ENCODE measurements at regions of chr7 and their contacts with region 1.

Region 1: DNA sequence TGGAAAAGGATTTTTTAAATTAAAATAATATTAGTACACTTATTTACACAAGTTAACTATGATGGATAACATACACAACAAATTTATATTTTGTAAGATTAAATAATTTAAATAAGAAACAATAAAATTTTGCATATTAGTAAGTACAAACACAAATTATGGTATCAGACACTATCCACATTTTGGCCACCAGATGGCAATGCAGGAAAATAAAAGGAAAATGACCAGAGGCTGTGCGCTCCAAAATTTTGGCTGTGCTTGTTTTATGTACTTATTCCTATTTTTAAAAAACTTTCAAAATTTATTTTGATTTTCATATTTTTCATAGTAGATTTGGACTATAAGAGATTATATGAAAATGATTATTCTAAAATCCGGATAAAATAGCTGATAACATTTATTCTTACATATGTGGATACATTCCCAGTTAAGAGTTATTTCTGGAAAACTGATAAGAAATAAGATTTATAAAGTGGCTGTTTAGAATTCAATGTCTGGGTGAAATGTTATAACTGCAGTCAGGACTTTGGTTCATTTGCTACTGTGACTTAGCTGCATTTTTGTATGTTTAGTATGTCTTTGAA is 274.7 kb upstream of the HGF start:
- DNase-seq: peak; percentile 16
- H3K4me3 ChIP-seq: no peak overlapping the region
- H3K27ac ChIP-seq: no peak overlapping the region
- H3K4me1 ChIP-seq: peaks cover 14 to 29% of the 10 kb centered on the region in 2 experiments; a peak in 3 of 4 replicates
- H3K27me3 ChIP-seq: no peaks in the 10 kb centered on the region
- CTCF ChIP-seq: peak; percentile 89
- EP300 ChIP-seq: 0 out of 4 replicates have a peak, but pooled peaks of 1 of the 2 experiments have one; percentile 16
- RAD21 ChIP-seq: peak; percentile 97

Region 2: DNA sequence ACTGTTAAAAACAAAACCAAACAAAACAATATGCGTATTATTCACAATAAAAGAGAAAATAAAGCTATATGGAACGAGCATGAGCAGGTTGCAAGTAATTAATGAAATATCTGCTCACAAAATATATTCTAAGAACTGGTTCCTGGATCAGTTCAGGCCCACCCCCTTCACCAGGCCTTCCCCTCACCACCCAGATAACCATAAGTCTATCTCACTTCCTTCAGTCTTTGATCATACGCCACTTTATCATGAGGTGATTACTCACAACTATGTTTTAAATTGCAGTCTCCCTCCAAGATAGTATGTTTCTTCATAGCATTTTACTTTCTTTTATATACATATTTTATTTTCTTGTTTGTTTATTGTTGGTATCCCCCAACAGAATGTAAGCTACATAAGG is 11.7 kb before region 1 on chr7:
- CTCF ChIA-PET with region 1: interaction called, 13 read pairs
- POLR2A ChIA-PET with region 1: no interaction called
- DNase-seq: no peak
- H3K4me3 ChIP-seq: no peak overlapping the region
- H3K27ac ChIP-seq: no peak overlapping the region
- H3K4me1 ChIP-seq: peaks cover 8 to 23% of the 10 kb centered on the region in 2 experiments
- H3K27me3 ChIP-seq: no peaks in the 10 kb centered on the region
- CTCF ChIP-seq: no peak
- EP300 ChIP-seq: no peak
- RAD21 ChIP-seq: no peak

Region 3: DNA sequence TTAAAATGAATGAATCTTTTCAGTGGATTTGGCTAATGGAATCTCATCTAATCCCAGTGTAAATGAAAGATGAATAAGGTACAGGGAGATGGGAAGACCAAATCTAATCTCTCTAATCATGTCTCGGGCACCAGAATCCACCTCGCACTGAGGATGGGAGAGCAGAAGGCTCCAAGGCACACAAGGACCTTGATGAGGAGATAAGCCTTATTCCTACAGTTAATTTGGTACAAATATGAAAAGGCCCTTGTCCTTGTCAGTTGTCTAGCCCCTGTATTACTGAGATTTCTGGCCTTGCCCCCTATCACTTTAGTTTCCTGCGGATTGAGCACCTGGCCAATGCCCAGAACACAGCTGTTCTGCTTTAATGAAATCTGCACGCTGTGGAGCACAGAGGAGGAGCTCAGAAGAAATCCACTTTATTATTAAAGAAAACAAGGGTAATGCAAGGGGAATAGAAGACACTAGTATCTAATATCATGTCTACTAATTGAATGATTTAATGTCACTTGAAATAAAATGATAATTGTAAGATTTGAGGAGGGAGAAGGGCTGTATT is 46.6 kb after region 1 on chr7:
- CTCF ChIA-PET with region 1: no interaction called
- POLR2A ChIA-PET with region 1: no interaction called
- DNase-seq: peak; percentile 15
- H3K4me3 ChIP-seq: no peak overlapping the region
- H3K27ac ChIP-seq: peak overlapping the region in 1 of 2 experiments; percentile 44; a peak in 2 of 4 replicates
- H3K4me1 ChIP-seq: peaks cover 0 to 10% of the 10 kb centered on the region in 2 experiments; a peak in 3 of 4 replicates
- H3K27me3 ChIP-seq: no peaks in the 10 kb centered on the region
- CTCF ChIP-seq: no peak
- EP300 ChIP-seq: no peak
- RAD21 ChIP-seq: no peak

Region 4: GRCh38 chr7:82234457-82235049 is 190.0 kb after region 1 on chr7:
- CTCF ChIA-PET with region 1: interaction called, 29 read pairs
- POLR2A ChIA-PET with region 1: no interaction called
- DNase-seq: peak; percentile 22
- H3K4me3 ChIP-seq: no peak overlapping the region
- H3K27ac ChIP-seq: peak overlapping the region in 1 of 2 experiments; percentile 69; a peak in 2 of 4 replicates
- H3K4me1 ChIP-seq: peaks cover 13 to 30% of the 10 kb centered on the region in 2 experiments; a peak in 3 of 4 replicates
- H3K27me3 ChIP-seq: no peaks in the 10 kb centered on the region
- CTCF ChIP-seq: peak; percentile 97
- EP300 ChIP-seq: peak in 1 of 2 experiments; percentile 9; a peak in 1 of 4 replicates
- RAD21 ChIP-seq: peak; percentile 91

Region 5: GRCh38 chr7:82323806-82324205 is 279.2 kb after region 1 on chr7:
- CTCF ChIA-PET with region 1: no interaction called
- POLR2A ChIA-PET with region 1: no interaction called
- DNase-seq: no peak
- H3K4me3 ChIP-seq: no peak overlapping the region
- H3K27ac ChIP-seq: no peak overlapping the region; a peak in 1 of 4 replicates
- H3K4me1 ChIP-seq: peaks cover 10 to 21% of the 10 kb centered on the region in 2 experiments; a peak in 3 of 4 replicates
- H3K27me3 ChIP-seq: no peaks in the 10 kb centered on the region
- CTCF ChIP-seq: no peak
- EP300 ChIP-seq: no peak
- RAD21 ChIP-seq: no peak

Measured in SK-N-SH (cell line).